Natural killer cell (primary cell): ENCODE measurements at regions of chr1 and their contacts with region 1.

Region 1: GRCh38 chr1:203673550-203674427 is 47.2 kb downstream of the ATP2B4 start:
- DNase-seq: peak; percentile 70 to 91
- ATAC-seq: peak; percentile 75 to 91 (median 81)
- H3K4me3 ChIP-seq: no peak overlapping the region
- H3K4me3 Mint-ChIP-seq: peak overlapping the region; percentile 90
- H3K27ac ChIP-seq: peak overlapping the region; percentile 81
- H3K27ac Mint-ChIP-seq: peak overlapping the region; percentile 93 to 99
- H3K4me1 ChIP-seq: peaks cover 64% of the 10 kb centered on the region
- H3K4me1 Mint-ChIP-seq: peaks cover 76 to 89% of the 10 kb centered on the region in 2 donors
- H3K27me3 ChIP-seq: no peaks in the 10 kb centered on the region
- H3K27me3 Mint-ChIP-seq: no peaks in the 10 kb centered on the region
- CTCF ChIP-seq: peak; percentile 50

Region 2: DNA sequence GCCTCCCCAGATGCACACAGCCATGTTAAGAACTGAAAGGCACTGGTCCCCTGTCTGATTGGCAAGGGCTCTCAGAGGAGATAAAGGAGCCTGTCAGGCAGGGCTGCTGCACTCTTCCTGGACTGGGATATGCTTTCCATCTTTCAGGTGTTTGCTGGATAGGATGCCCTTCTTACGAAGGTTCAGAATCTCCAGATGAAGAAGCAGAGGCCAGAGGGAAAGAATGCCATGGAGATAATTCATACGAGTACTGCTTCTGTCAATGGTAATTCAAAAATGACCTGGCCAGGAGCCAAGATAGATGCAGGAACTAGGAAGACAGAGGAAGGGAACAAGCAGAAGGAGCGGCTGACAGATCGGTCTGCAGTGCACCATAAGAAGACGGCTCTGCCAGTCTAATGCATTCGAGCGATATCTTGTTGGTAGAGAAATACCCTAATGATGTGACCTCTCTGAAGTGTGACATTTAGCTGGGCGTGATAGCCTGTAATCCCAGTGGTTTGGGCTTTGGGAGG is 63.8 kb before region 1 on chr1:
- intact Hi-C with region 1: loop called (anchors 2 kb)
- DNase-seq: no peak
- ATAC-seq: no peak
- H3K4me3 ChIP-seq: no peak overlapping the region
- H3K4me3 Mint-ChIP-seq: no peak overlapping the region
- H3K27ac ChIP-seq: no peak overlapping the region
- H3K27ac Mint-ChIP-seq: no peak overlapping the region
- H3K4me1 ChIP-seq: peaks cover 34% of the 10 kb centered on the region
- H3K4me1 Mint-ChIP-seq: peaks cover 20 to 50% of the 10 kb centered on the region in 2 donors
- H3K27me3 ChIP-seq: no peaks in the 10 kb centered on the region
- H3K27me3 Mint-ChIP-seq: no peaks in the 10 kb centered on the region
- CTCF ChIP-seq: no peak

Region 3: DNA sequence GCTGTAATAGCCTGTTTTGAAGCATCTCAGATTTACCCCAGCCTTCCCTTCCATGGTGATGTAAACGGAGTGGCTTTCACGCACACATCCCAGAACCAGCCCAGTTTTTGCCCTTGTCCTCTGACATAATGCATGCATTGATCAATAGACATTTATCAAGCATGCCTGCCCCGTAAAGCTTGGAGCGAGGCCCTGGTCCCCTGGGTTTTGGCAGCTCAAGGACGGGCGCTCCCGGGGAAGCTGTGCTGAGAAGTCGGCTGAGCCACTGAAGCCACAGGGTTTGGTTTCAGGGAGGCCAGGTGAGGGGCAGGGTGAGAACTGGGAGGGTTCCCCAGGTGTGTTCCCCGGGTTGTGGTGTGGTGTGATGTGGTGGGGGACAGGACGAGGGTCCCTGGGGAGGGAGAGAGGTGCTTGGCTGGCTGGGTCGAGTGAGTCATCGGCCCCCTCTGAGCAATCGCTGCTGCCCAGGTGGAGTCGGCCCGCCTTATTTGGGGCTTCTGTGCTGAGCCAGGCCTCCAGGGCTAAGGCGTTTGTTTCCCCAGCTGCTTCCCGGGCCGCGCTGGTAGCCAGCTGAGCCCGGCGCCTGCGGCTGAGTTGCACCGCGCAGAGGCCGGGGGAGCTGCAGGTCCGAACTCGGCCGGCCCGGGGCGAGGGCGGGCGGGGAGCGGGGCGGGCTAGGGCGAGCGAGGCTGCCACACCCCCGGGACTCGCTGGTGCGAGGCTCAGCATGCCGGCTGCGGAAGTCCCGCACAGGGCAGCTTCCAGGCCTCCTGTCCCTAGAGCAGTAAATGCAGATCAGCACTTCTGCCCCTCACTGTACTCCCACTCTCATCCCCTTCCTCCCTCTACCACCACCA is 23.6 kb before region 1 on chr1:
- intact Hi-C with region 1: loop called (anchors 1 kb)
- DNase-seq: peak; percentile 68 to 79
- ATAC-seq: peak; percentile 40 to 59 (median 42)
- H3K4me3 ChIP-seq: peak overlapping the region; percentile 26
- H3K4me3 Mint-ChIP-seq: peak overlapping the region; percentile 86
- H3K27ac ChIP-seq: peak overlapping the region; percentile 89
- H3K27ac Mint-ChIP-seq: peak overlapping the region; percentile 89 to 99
- H3K4me1 ChIP-seq: peaks cover 76% of the 10 kb centered on the region
- H3K4me1 Mint-ChIP-seq: peaks cover 66 to 70% of the 10 kb centered on the region in 2 donors
- H3K27me3 ChIP-seq: no peaks in the 10 kb centered on the region
- H3K27me3 Mint-ChIP-seq: no peaks in the 10 kb centered on the region
- CTCF ChIP-seq: no peak

Region 4: DNA sequence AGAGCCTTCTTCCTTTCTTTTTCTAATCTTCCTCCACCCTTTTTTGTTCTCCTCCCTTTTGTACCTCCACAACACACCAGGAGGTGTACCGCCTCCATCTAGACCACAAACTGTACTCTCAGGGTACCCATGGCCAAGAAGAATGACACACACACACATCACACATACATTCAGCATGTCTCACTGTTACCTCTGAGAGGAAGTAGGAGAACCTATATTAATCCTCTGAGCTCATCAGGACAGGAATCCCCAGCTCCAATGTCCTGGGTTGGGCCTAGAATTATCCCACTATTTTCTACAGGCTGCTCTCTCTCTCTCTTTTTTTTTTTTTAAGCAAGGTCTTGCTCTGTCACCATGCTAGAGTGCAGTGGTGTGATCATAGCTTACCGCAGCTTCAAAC is 10.5 kb before region 1 on chr1:
- intact Hi-C with region 1: loop called (anchors 1 kb)
- DNase-seq: peak in 1 of 2 donors; percentile 42
- ATAC-seq: peak; percentile 58 to 72 (median 69)
- H3K4me3 ChIP-seq: no peak overlapping the region
- H3K4me3 Mint-ChIP-seq: peak overlapping the region; percentile 58
- H3K27ac ChIP-seq: peak overlapping the region; percentile 41
- H3K27ac Mint-ChIP-seq: peak overlapping the region; percentile 89 to 93
- H3K4me1 ChIP-seq: peaks cover 57% of the 10 kb centered on the region
- H3K4me1 Mint-ChIP-seq: peaks cover 68 to 73% of the 10 kb centered on the region in 2 donors
- H3K27me3 ChIP-seq: no peaks in the 10 kb centered on the region
- H3K27me3 Mint-ChIP-seq: no peaks in the 10 kb centered on the region
- CTCF ChIP-seq: no peak

Region 5: GRCh38 chr1:203696673-203697072 is 22.9 kb after region 1 on chr1:
- intact Hi-C with region 1: loop called (anchors 2 kb)
- DNase-seq: no peak
- ATAC-seq: peak in 2 of 3 donors; percentile 18 to 40
- H3K4me3 ChIP-seq: no peak overlapping the region
- H3K4me3 Mint-ChIP-seq: no peak overlapping the region
- H3K27ac ChIP-seq: peak overlapping the region; percentile 32
- H3K27ac Mint-ChIP-seq: peak overlapping the region; percentile 60 to 67
- H3K4me1 ChIP-seq: peaks cover 29% of the 10 kb centered on the region
- H3K4me1 Mint-ChIP-seq: peaks cover 54 to 55% of the 10 kb centered on the region in 2 donors
- H3K27me3 ChIP-seq: no peaks in the 10 kb centered on the region
- H3K27me3 Mint-ChIP-seq: no peaks in the 10 kb centered on the region
- CTCF ChIP-seq: no peak

Region 6: GRCh38 chr1:203769505-203770343 is 95.9 kb after region 1 on chr1:
- intact Hi-C with region 1: loop called (anchors 2 kb)
- DNase-seq: peak in 1 of 2 donors; percentile 26
- ATAC-seq: peak in 2 of 3 donors; percentile 9 to 24
- H3K4me3 ChIP-seq: no peak overlapping the region
- H3K4me3 Mint-ChIP-seq: peak overlapping the region; percentile 71
- H3K27ac ChIP-seq: peak overlapping the region; percentile 42
- H3K27ac Mint-ChIP-seq: peak overlapping the region; percentile 71 to 86
- H3K4me1 ChIP-seq: peaks cover 43% of the 10 kb centered on the region
- H3K4me1 Mint-ChIP-seq: peaks cover 46 to 49% of the 10 kb centered on the region in 2 donors
- H3K27me3 ChIP-seq: no peaks in the 10 kb centered on the region
- H3K27me3 Mint-ChIP-seq: no peaks in the 10 kb centered on the region
- CTCF ChIP-seq: no peak